Breast epithelium (tissue), 4 donors: ENCODE measurements at regions of chr10 and their contacts with region 1.

Region 1: GRCh38 chr10:3640816-3641215 is 144.2 kb downstream of the KLF6 start:
- DNase-seq: no peak
- H3K4me3 ChIP-seq: no peak overlapping the region
- H3K27ac ChIP-seq: no peak overlapping the region
- H3K4me1 ChIP-seq: no peaks in the 10 kb centered on the region
- H3K27me3 ChIP-seq: no peaks in the 10 kb centered on the region
- CTCF ChIP-seq: no peak
- POLR2A ChIP-seq: no peak

Region 2: DNA sequence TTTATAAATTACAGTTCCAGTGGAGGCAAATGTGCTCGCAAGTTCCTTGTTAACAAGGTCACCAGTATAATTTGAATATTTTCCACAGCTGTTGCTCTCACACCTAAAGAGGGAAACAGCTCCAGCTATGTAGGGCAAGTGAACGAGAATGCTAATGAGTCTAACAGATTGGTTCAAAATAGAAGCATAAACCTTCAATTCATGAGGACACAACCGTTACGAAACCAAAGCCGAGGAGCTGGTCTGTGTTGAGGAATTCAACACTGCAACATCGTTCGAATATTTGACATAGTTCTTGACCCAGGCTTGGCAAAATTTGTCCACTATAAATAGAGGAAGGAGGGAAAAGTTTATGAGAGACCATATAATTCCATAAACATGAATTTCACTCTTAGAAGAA is 17.1 kb before region 1 on chr10:
- intact Hi-C with region 1: no loop called
- DNase-seq: peak in 1 of 2 donors; percentile 44
- H3K4me3 ChIP-seq: no peak overlapping the region
- H3K27ac ChIP-seq: no peak overlapping the region
- H3K4me1 ChIP-seq: peaks cover 0 to 4% of the 10 kb centered on the region in 2 donors
- H3K27me3 ChIP-seq: no peaks in the 10 kb centered on the region
- CTCF ChIP-seq: no peak
- POLR2A ChIP-seq: no peak

Region 3: DNA sequence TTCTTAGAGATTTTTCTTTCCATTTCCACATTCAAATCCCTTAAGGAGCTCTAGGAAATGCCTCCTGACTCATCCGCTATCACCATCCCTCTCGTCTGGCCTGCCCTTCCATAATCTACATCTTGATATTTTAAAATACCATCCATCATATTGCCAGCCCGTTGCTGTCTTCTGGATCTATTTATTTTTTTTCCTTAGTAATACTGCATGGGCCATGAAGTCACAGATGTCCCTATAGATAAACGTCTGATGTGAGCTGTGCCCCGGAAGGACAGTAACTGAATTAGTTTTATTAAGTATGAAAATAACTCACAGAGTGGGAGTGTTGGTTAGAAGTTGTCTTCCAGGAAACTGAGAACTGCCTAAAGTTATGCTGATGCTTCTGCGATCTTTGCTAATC is 68.0 kb after region 1 on chr10:
- intact Hi-C with region 1: no loop called
- DNase-seq: no peak
- H3K4me3 ChIP-seq: no peak overlapping the region
- H3K27ac ChIP-seq: no peak overlapping the region
- H3K4me1 ChIP-seq: no peaks in the 10 kb centered on the region
- H3K27me3 ChIP-seq: no peaks in the 10 kb centered on the region
- CTCF ChIP-seq: no peak
- POLR2A ChIP-seq: no peak

Region 4: DNA sequence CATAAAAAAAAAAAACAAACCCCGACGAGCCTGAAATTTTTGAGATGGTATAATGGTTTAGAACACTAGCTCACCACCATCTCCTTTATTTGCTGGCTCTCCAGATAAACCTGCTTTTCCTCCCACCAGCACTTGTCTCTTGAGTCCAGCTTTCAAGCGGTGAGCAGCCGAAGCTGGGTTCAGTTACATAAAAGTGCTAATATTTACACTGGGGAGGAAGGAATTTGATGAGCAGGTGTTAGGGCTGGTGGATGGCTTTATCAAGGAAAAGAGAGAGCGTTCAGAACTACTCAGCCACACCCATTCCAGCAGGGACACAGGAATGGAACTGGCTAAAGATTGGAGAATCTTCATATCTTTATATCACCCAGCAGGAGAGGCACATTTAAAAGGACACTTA is 1877.3 kb after region 1 on chr10:
- intact Hi-C with region 1: loop called (anchors 5 kb)
- DNase-seq: peak in 1 of 2 donors; percentile 20
- H3K4me3 ChIP-seq: no peak overlapping the region
- H3K27ac ChIP-seq: no peak overlapping the region
- H3K4me1 ChIP-seq: peaks cover 0 to 3% of the 10 kb centered on the region in 2 donors
- H3K27me3 ChIP-seq: no peaks in the 10 kb centered on the region
- CTCF ChIP-seq: no peak
- POLR2A ChIP-seq: no peak